ENCODE measurements at regions of chr5 and their contacts with region 1.

Region 1: GRCh38 chr5:137660349-137660817 is 75.5 kb downstream of the KLHL3 start:
- DNase-seq: peak; percentile 38 to 86 (median 66)
- ATAC-seq: peak; percentile 88 to 97
- H3K4me3 Mint-ChIP-seq: no peak overlapping the region
- H3K27ac Mint-ChIP-seq: peak overlapping the region in 2 of 10 donors; percentile 25 to 57
- H3K4me1 Mint-ChIP-seq: peaks cover 7 to 12% (median 11%) of the 10 kb centered on the region in 4 donors
- H3K27me3 Mint-ChIP-seq: no peaks in the 10 kb centered on the region

Region 2: DNA sequence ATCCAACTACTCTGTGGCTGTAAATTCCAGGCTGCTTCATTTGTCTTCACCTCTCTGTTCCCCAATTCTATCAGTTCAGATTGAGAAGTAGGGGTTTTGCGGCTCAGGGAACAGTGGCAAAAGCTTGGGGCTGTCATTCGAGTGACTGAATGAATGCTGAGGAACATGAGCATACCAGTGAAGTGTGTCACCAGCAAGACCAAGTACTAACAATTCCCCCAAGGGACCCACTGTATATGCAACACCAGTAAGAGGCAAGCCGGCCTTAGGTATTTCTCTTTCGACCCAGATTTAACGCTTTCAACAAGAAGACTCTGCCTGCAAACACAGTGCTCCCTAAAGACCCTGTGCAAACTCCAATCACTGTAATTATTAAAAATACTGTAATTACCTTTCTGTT is 49.7 kb after region 1 on chr5:
- POLR2A ChIA-PET with region 1: no interaction called
- DNase-seq: no peak
- ATAC-seq: no peak
- H3K4me3 Mint-ChIP-seq: no peak overlapping the region
- H3K27ac Mint-ChIP-seq: no peak overlapping the region
- H3K4me1 Mint-ChIP-seq: peaks cover 0 to 13% (median 8%) of the 10 kb centered on the region in 4 donors
- H3K27me3 Mint-ChIP-seq: no peaks in the 10 kb centered on the region

Region 3: DNA sequence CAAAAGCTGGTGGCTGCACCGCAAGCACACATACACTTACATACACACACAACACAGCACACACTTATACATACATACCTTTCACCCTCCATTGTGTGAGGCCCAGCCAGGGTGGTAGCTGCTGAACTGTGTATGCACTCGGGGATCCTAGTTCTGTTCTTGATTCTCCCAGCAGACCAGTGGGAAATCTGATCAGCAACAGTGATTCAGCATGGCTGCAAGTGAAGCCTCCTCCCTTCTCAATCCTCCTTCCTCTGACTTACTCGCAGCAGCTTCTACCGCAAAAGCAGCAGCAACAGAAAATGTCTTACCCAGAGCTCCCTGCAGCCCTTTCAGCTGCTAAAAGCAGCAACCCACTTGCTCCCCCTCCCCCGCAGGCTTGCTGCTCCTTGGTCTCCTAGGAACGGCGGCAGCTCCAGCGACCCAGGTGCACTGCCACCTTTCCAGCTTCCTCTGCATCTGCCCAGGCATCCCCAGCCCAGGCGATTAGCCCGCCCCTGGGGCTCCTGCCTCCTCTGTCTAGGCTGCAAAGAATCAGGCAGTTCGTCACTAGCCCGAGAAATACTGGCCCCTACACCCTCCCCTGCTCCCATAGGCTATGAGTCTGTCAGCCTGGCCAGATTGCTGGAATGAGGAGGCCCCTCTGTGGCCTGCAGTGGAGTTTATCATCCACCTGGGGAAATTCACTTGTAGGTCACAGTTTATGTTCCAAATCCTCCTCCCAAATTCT is 75.3 kb after region 1 on chr5 and contains the start of gene KLHL3:
- POLR2A ChIA-PET with region 1: interaction called, 27 read pairs
- DNase-seq: peak; percentile 13 to 67 (median 27)
- ATAC-seq: peak; percentile 38 to 49
- H3K4me3 Mint-ChIP-seq: no peak within 1 kb of the TSS
- H3K27ac Mint-ChIP-seq: no peak within 1 kb of the TSS
- H3K4me1 Mint-ChIP-seq: peaks cover 0 to 29% (median 20%) of the 10 kb centered on the region in 4 donors
- H3K27me3 Mint-ChIP-seq: no peaks in the 10 kb centered on the region
- polyA plus RNA-seq, gene KLHL3: 2.7 to 8.1 (median 4.5) TPM

Region 4: DNA sequence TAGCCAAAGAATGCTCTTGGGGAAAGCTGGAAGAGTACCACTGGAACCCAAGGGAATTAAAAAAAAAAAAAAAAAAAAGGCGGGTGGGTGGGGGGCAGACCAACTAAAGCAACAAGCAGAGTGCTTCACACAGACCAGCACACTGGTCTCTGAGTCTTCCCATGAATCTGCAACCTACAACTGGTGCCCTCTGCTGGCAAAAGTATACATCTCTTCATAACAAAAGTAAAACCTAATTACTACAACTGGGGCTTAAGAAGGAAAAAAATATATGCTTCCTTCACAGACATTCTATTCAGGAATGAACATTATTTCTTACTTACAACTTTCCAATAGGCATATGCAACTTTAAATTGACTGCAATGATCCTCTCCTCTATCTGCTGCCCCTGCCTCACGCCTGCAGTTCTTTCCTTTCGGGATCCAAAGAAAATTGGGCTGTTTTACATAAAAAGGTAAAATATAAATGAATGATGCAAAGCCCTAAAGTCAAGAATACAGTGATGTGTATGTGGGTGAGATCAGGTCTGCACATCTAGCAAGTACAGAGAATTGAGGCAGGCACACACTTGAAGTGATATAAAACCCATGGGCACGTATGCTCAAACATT is 82.8 kb after region 1 on chr5:
- POLR2A ChIA-PET with region 1: interaction called, 19 read pairs
- DNase-seq: peak; percentile 20 to 82 (median 58)
- ATAC-seq: peak; percentile 92 to 94
- H3K4me3 Mint-ChIP-seq: no peak overlapping the region
- H3K27ac Mint-ChIP-seq: peak overlapping the region in 2 of 10 donors; percentile 21 to 44
- H3K4me1 Mint-ChIP-seq: peaks cover 0 to 30% (median 13%) of the 10 kb centered on the region in 4 donors
- H3K27me3 Mint-ChIP-seq: no peaks in the 10 kb centered on the region